Lower leg skin (tissue), 4 donors: ENCODE measurements at regions of chr15 and their contacts with region 1.

Region 1: DNA sequence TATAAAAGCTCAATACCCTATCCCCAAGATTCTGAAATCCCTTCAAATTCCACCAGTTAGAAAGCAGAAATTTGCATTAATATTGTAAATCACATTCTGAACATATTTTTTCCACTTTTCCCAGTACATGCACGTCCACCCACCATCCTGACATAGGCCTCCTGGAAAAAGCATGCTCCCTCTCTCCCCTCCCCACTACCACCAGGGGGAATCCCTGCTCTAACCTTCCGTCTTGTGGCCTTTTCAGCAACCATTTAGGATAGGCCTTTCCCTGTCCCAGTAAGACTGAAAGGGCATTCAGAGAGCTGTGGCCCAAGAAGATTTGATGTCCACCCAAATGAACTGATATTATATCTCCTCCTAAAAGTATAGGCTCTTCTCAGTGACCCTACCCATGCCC is 182.1 kb downstream of the ARRDC4 start:
- DNase-seq: no peak
- H3K4me3 ChIP-seq: no peak overlapping the region
- CTCF ChIP-seq: no peak
- POLR2A ChIP-seq: no peak

Region 2: DNA sequence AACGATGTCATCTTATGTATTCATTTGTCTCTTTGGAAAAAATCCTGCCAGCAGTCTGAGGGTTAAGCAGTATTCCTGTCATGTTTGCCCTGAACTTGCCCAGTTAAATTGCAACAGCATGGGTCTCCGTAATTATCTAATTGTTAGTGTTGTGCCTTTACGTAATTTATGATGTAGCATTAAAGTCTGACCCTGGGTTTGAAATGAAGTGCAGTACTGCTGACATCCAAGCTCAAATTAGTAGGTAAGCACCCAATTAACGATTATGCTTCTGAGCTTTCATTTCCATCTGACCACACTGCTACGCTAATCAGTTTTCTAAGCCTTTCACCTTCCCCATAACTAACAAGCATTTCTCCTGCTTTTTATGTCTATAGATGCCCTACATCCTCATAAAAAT is 59.7 kb after region 1 on chr15:
- intact Hi-C with region 1: no loop called
- DNase-seq: no peak
- H3K4me3 ChIP-seq: no peak overlapping the region
- CTCF ChIP-seq: no peak
- POLR2A ChIP-seq: no peak

Region 3: DNA sequence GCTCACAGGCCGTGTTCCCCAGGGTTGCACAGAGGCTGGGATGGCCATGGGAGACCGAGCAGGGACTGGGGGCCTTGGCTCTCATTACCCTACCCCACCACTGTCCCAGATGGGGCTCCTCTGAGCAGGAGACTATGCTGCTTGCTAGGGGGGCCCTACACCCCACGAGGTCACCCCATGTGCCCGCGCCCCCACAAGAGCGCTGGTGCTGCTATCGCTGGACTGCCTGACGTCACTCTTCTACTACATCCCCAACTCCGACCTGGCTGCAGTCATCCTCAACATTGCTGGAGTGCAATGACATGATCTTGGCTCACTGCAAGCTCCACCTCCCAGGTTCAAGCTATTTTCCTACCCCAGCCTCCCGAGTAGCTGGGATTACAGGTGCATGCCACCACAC is 125.6 kb after region 1 on chr15:
- intact Hi-C with region 1: loop called (anchors 5 kb)
- DNase-seq: no peak
- H3K4me3 ChIP-seq: no peak overlapping the region
- CTCF ChIP-seq: no peak
- POLR2A ChIP-seq: no peak